Left ventricle myocardium inferior (tissue), 1 donor: ENCODE measurements at regions of chr3 and their contacts with region 1.

Region 1: GRCh38 chr3:114827495-114827894 is 319.6 kb downstream of the ZBTB20 start:
- DNase-seq: no peak
- H3K4me3 ChIP-seq: no peak overlapping the region
- H3K27ac ChIP-seq: no peak overlapping the region
- H3K4me1 ChIP-seq: peaks cover 11% of the 10 kb centered on the region
- H3K27me3 ChIP-seq: no peaks in the 10 kb centered on the region
- CTCF ChIP-seq: peak; percentile 78

Region 2: DNA sequence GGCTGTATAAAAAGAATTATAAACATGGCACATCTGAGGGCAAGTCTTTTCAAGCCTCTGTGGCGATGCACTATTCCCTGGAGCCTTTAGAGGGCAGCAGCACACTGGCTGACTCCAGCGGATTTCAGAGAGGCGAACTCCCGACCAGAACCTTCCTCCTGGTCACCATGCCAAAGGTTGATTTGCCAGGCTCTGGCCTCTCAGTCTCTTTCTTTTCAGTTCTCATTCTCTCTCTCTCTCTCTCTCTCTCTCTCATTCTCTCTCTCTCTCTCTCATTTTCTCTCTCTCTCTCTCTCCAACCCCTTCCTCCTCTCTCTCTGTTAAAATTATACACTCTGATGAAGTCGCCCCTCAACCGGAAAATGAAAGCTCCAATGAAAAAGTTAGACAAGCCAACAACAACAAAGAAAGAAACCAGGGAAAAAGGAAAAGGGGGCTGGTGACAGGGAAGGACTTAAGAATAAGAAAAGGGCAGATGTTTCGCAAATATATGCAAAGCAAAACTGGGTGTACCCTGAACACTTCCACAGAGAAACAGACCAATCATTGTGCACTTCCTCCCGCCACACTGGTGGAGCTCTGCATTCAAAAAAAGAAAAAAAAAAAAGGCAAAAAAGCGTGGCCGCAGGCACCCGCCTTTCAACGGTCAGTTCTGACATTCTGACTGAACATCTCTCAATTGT is 443.5 kb before region 1 on chr3:
- intact Hi-C with region 1: loop called (anchors 10 kb)
- DNase-seq: peak; percentile 80
- H3K4me3 ChIP-seq: peak overlapping the region; percentile 60
- H3K27ac ChIP-seq: peak overlapping the region; percentile 83
- H3K4me1 ChIP-seq: peaks cover 58% of the 10 kb centered on the region
- H3K27me3 ChIP-seq: no peaks in the 10 kb centered on the region
- CTCF ChIP-seq: peak; percentile 97

Region 3: GRCh38 chr3:114884213-114884923 is 56.9 kb after region 1 on chr3:
- intact Hi-C with region 1: no loop called
- DNase-seq: no peak
- H3K4me3 ChIP-seq: no peak overlapping the region
- H3K27ac ChIP-seq: no peak overlapping the region
- H3K4me1 ChIP-seq: peaks cover 16% of the 10 kb centered on the region
- H3K27me3 ChIP-seq: no peaks in the 10 kb centered on the region
- CTCF ChIP-seq: no peak

Region 4: DNA sequence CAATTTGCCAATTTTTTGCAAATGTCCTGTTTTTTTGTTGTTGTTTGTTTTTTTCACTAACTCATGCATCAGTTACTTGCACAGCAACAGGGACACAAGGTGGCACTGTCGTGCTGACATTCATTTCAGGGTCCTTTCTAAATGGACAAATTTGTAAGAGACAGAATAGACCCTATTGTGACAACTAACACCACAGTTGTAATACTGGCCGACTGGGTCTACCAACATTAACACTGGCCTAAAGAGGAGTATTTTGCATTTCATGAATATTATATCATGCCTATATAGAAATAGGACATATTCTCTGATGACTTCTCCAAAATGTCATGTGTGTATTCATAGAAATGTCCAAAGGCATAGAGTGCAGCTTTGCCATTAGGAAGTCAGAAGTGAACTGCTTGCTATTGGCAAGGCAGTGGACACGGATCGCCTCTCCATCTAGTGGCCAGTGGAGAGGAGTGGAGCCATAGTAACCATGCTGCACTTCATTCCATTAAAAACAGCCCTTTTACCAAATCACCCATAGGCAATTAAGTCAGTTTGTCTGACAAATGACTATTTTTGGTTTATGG is 264.8 kb after region 1 on chr3:
- intact Hi-C with region 1: loop called (anchors 5 kb)
- DNase-seq: peak; percentile 62
- H3K4me3 ChIP-seq: peak overlapping the region; percentile 6
- H3K27ac ChIP-seq: peak overlapping the region; percentile 60
- H3K4me1 ChIP-seq: peaks cover 76% of the 10 kb centered on the region
- H3K27me3 ChIP-seq: no peaks in the 10 kb centered on the region
- CTCF ChIP-seq: peak; percentile 79

Region 5: GRCh38 chr3:115272036-115272824 is 444.7 kb after region 1 on chr3:
- intact Hi-C with region 1: no loop called
- DNase-seq: no peak
- H3K4me3 ChIP-seq: no peak overlapping the region
- H3K27ac ChIP-seq: no peak overlapping the region
- H3K4me1 ChIP-seq: peaks cover 7% of the 10 kb centered on the region
- H3K27me3 ChIP-seq: no peaks in the 10 kb centered on the region
- CTCF ChIP-seq: no peak